T-cell (primary cell): ENCODE measurements at regions of chr12 and their contacts with region 1.

Region 1: DNA sequence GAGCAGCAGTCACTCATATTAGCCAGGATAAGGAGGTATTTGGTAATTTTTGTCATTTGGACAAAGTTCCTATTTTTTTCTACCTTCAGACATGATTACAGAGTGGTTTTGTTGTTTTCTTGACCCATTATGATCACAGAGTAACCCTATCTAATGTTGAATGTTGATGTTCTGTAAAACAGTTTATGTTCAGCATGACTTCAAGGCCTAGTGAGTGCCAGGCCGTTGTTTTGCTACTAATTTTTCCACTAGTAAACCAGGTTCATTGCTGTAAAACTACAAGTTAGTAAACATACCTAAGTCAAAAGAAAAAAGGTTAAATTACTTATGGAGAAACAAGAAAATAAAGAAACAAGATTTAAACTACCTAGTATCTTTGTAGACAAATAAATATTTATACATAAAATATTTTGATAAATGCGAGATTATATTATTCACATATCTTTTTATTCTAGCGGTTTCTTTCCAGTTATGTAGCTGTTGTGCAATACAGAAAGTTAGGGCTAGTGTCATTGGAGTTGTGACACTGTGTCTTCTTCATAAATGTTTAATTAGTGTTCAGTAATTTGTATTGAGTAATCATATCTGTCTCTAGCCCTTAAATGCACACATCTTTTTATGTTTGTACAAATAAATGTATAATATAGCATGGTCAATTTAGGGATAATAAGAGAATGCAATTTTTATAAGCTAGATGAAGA is 16.5 kb downstream of the ETNK1 start:
- DNase-seq: no peak
- ATAC-seq: no peak
- H3K4me3 ChIP-seq: no peak overlapping the region
- H3K4me3 Mint-ChIP-seq: no peak overlapping the region
- H3K27ac ChIP-seq: no peak overlapping the region
- H3K27ac Mint-ChIP-seq: peak overlapping the region in 1 of 2 donors; percentile 72
- H3K4me1 ChIP-seq: peaks cover 0 to 8% of the 10 kb centered on the region in 2 experiments
- H3K4me1 Mint-ChIP-seq: peaks cover 44 to 56% (median 52%) of the 10 kb centered on the region in 3 donors
- H3K27me3 ChIP-seq: no peaks in the 10 kb centered on the region
- H3K27me3 Mint-ChIP-seq: no peaks in the 10 kb centered on the region

Region 2: DNA sequence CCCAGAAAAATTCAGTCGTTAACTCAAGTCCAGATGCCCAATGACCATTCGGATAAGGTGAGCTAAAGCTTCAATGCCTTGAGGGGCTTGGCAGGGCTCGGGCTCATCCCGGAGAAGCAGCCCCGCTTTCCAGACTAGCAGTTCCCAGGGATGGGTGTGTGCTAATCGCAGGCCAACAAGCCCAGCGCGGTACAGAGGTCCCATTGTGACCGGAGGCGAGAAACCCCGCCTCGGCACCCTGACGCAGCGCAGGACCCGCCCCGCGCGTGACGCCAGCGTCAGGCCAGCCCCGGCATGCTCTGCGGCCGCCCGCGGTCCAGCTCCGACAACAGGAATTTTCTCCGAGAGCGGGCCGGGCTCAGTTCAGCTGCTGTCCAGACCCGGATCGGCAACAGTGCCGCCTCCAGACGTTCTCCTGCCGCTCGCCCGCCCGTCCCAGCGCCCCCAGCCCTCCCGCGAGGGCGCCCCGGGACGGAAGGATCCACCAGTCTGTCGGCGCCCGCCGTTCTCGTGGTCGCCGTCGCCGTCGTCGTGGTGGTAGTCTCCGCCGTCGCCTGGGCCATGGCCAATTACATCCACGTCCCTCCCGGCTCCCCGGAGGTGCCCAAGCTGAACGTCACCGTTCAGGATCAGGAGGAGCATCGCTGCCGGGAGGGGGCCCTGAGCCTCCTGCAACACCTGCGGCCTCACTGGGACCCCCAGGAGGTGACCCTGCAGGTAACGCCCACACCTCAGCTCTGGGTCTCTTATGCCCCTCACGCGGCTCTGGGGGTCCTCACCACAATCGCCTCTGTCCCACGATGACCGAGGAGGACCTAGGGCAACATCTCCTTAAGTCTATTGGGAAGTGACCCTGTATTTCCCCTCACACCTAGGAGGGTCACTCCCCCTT is 16.4 kb before region 1 on chr12 and contains the start of gene ETNK1:
- CTCF ChIA-PET with region 1: interaction called, 9 to 17 read pairs
- POLR2A ChIA-PET with region 1: interaction called in 1 of 2 experiments, 3 read pairs
- DNase-seq: peak; percentile 57 to 88 (median 76)
- ATAC-seq: peak; percentile 96 to 99 (median 98)
- H3K4me3 ChIP-seq: peak within 1 kb of the TSS; percentile 84 to 97
- H3K4me3 Mint-ChIP-seq: peak within 1 kb of the TSS; percentile 85 to 99 (median 90)
- H3K27ac ChIP-seq: peak within 1 kb of the TSS; percentile 93
- H3K27ac Mint-ChIP-seq: peak within 1 kb of the TSS; percentile 93 to 96
- H3K4me1 ChIP-seq: peaks cover 8 to 35% of the 10 kb centered on the region in 2 experiments
- H3K4me1 Mint-ChIP-seq: peaks cover 41 to 50% (median 44%) of the 10 kb centered on the region in 3 donors
- H3K27me3 ChIP-seq: peaks cover 0 to 4% of the 10 kb centered on the region in 2 experiments
- H3K27me3 Mint-ChIP-seq: peaks cover 6 to 10% of the 10 kb centered on the region in 2 donors
- total RNA-seq, gene ETNK1: 50.9 to 77.4 (median 69.9) TPM

Region 3: GRCh38 chr12:22700106-22700505 is 58.6 kb after region 1 on chr12:
- CTCF ChIA-PET with region 1: no interaction called
- POLR2A ChIA-PET with region 1: no interaction called
- DNase-seq: no peak
- ATAC-seq: no peak
- H3K4me3 ChIP-seq: no peak overlapping the region
- H3K4me3 Mint-ChIP-seq: no peak overlapping the region
- H3K27ac ChIP-seq: no peak overlapping the region
- H3K27ac Mint-ChIP-seq: no peak overlapping the region
- H3K4me1 ChIP-seq: no peaks in the 10 kb centered on the region
- H3K4me1 Mint-ChIP-seq: no peaks in the 10 kb centered on the region
- H3K27me3 ChIP-seq: peaks cover 0 to 3% of the 10 kb centered on the region in 2 experiments
- H3K27me3 Mint-ChIP-seq: no peaks in the 10 kb centered on the region

Region 4: DNA sequence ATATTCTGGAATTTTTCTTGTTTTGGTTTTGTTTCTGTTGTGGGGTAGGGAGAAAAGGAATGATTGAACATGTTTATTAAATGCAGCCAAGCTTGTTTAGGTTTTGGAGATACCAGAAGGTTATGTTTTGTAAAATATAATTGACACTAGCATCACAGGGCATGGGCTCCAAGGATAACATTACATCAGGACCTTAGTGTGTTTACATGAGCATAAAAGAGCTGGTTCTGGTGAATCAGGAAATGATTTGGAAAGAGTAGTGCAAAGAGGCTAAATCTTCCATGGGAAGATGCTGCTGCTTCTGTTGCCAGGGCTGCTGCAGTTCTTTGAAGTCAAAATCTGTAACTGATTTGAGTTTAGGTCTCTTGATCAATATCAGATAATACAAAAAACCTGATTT is 102.2 kb after region 1 on chr12:
- CTCF ChIA-PET with region 1: no interaction called
- POLR2A ChIA-PET with region 1: interaction called in 1 of 2 experiments, 11 read pairs
- DNase-seq: no peak
- ATAC-seq: no peak
- H3K4me3 ChIP-seq: no peak overlapping the region
- H3K4me3 Mint-ChIP-seq: no peak overlapping the region
- H3K27ac ChIP-seq: no peak overlapping the region
- H3K27ac Mint-ChIP-seq: no peak overlapping the region
- H3K4me1 ChIP-seq: no peaks in the 10 kb centered on the region
- H3K4me1 Mint-ChIP-seq: no peaks in the 10 kb centered on the region
- H3K27me3 ChIP-seq: peaks cover 0 to 5% of the 10 kb centered on the region in 2 experiments
- H3K27me3 Mint-ChIP-seq: peaks cover 2 to 20% of the 10 kb centered on the region in 2 donors